Ascending aorta (tissue), 2 donors: ENCODE measurements at regions of chrX and their contacts with region 1.

Region 1: DNA sequence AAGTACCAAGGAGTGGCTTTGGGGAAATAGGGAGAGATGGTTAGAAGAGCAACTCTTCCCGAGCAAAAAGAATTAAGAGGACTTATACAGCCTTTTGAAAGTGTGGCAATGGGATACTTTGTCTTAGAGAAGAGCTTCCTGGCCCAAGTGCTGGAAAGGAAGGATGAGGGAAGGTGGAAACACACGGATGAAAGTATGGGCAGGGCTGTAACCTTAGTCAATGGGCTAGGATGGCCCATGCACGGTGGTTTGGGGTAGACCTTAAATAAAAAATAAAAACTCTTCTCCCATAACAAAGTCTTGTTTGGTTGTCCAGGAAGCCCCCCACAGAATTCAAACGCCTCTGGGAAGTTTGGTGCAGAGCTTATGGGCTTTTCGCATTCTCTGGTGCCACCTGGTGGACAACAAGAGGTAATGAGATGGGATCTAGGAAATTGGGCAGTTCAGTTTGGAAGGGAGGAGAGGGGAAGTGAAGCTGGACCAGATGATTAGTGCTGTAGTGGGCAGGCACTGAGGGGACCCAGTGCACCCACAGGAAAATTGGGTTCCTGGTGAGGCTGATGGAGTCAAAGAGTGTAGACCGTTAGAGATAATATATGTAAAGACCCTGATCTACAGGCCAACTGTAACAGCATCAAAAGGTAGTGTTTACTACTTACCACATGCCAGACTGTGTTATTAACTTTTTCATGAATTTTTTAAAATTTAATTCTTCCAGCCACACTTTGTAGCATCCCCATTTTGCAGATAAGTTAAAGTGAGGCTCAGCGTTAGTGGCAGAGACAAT is 13.8 kb upstream of the ENOX2 start:
- DNase-seq: no peak
- H3K4me3 ChIP-seq: no peak overlapping the region
- H3K27ac ChIP-seq: no peak overlapping the region
- H3K4me1 ChIP-seq: no peaks in the 10 kb centered on the region
- H3K27me3 ChIP-seq: no peaks in the 10 kb centered on the region
- CTCF ChIP-seq: peak; percentile 55 to 86 (median 74)

Region 2: GRCh38 chrX:130339408-130340222 is 577.2 kb before region 1 on chrX and contains the start of gene SLC25A14:
- intact Hi-C with region 1: loop called (anchors 10 kb)
- DNase-seq: peak in 1 of 2 donors; percentile 78
- H3K4me3 ChIP-seq: peak within 1 kb of the TSS; percentile 58 to 73
- H3K27ac ChIP-seq: peak within 1 kb of the TSS; percentile 10 to 12
- H3K4me1 ChIP-seq: no peaks in the 10 kb centered on the region
- H3K27me3 ChIP-seq: no peaks in the 10 kb centered on the region
- CTCF ChIP-seq: no peak
- total RNA-seq, gene SLC25A14: 14.9 TPM

Region 3: GRCh38 chrX:130393451-130394074 is 523.3 kb before region 1 on chrX:
- intact Hi-C with region 1: loop called (anchors 1 kb)
- DNase-seq: no peak
- H3K4me3 ChIP-seq: no peak overlapping the region
- H3K27ac ChIP-seq: no peak overlapping the region
- H3K4me1 ChIP-seq: no peaks in the 10 kb centered on the region
- H3K27me3 ChIP-seq: no peaks in the 10 kb centered on the region
- CTCF ChIP-seq: peak; percentile 26 to 65 (median 63)

Region 4: GRCh38 chrX:130539721-130540321 is 377.0 kb before region 1 on chrX:
- intact Hi-C with region 1: loop called (anchors 2 kb)
- DNase-seq: no peak
- H3K4me3 ChIP-seq: no peak overlapping the region
- H3K27ac ChIP-seq: no peak overlapping the region
- H3K4me1 ChIP-seq: no peaks in the 10 kb centered on the region
- H3K27me3 ChIP-seq: no peaks in the 10 kb centered on the region
- CTCF ChIP-seq: peak in 2 of 3 experiments; percentile 45 to 66

Region 5: DNA sequence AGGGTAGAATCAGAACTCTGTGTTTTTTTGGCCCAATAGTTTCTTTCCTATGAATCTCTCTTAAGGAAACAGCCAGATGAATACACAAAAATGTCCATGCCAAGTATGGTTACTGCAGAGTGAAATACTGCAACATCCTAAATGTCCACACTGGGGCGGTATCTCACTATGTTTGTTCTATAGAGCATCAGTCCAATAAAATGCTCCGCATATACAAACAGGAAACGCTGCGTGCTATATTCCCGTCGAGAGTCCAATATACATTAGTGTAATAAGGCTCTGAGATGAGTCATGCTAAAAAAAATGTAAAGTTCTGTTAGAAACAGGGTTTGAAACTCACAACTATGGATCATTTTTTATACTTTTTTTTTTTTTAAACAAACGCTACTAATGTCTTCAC is 59.1 kb after region 1 on chrX:
- intact Hi-C with region 1: no loop called
- DNase-seq: no peak
- H3K4me3 ChIP-seq: no peak overlapping the region
- H3K27ac ChIP-seq: no peak overlapping the region
- H3K4me1 ChIP-seq: no peaks in the 10 kb centered on the region
- H3K27me3 ChIP-seq: no peaks in the 10 kb centered on the region
- CTCF ChIP-seq: peak in 2 of 3 experiments; percentile 26 to 49